ENCODE measurements at regions of chr14 and their contacts with region 1.

Region 1: DNA sequence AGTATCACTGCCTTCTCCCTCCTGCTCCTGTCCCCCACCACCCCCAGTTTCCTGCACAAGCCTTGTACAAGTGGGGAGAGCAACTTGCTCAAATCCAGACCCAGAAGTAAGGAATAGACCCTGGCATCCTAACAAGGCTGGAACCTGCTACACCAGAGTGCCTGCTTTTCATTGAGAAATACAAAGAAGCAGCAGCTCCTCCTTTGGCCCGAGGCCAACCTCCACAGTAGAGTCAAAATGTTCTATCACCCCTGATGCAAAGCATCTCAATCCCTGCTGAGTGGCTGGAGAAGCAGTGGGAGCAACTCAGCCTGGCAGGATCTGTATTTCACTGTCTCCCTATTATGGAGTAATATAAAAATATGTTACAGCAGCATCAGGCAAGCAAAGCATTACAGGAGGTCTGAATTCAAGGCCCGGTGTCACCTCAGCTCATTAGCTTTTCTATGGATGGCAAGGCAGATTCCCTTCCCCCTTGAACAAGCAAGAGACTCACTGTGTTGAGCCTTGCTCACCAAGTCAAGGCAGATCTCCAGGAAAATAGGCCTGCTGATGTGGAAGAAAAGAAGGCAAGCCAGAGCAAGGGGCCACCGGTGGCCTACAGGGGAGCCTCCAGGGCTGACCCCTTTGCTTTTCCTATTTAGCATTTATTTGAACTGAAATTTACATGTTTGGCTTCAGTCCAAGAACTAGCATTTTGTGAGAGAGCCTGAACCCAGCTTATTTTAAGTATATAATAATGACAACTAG is 186.3 kb upstream of the EGLN3 start:
- DNase-seq: no peak
- ATAC-seq: no peak
- H3K4me3 ChIP-seq: no peak overlapping the region
- H3K27ac ChIP-seq: no peak overlapping the region
- H3K4me1 ChIP-seq: peaks cover 0 to 13% (median 5%) of the 10 kb centered on the region in 9 donors
- H3K27me3 ChIP-seq: no peaks in the 10 kb centered on the region
- CTCF ChIP-seq: no peak

Region 2: GRCh38 chr14:34203251-34203775 is 66.1 kb after region 1 on chr14:
- intact Hi-C with region 1: loop called in 1 of 10 experiments (anchors 10 kb)
- DNase-seq: no peak
- ATAC-seq: no peak
- H3K4me3 ChIP-seq: no peak overlapping the region
- H3K27ac ChIP-seq: no peak overlapping the region
- H3K4me1 ChIP-seq: no peaks in the 10 kb centered on the region
- H3K27me3 ChIP-seq: no peaks in the 10 kb centered on the region
- CTCF ChIP-seq: no peak

Measured in heart right ventricle (tissue), 16 donors.